Activated CD8-positive, alpha-beta T cell treated with anti-CD3 and anti-CD28 coated beads for 36 hours (primary cell): ENCODE measurements at regions of chr7 and their contacts with region 1.

Region 1: GRCh38 chr7:106056513-106057203 is 55.5 kb downstream of the SYPL1 start:
- DNase-seq: peak; percentile 83
- ATAC-seq: peak; percentile 97
- H3K4me3 Mint-ChIP-seq: no peak overlapping the region
- H3K27ac Mint-ChIP-seq: peak overlapping the region; percentile 34
- H3K4me1 Mint-ChIP-seq: peaks cover 25% of the 10 kb centered on the region
- H3K27me3 Mint-ChIP-seq: no peaks in the 10 kb centered on the region
- CTCF ChIP-seq: peak; percentile 87

Region 2: DNA sequence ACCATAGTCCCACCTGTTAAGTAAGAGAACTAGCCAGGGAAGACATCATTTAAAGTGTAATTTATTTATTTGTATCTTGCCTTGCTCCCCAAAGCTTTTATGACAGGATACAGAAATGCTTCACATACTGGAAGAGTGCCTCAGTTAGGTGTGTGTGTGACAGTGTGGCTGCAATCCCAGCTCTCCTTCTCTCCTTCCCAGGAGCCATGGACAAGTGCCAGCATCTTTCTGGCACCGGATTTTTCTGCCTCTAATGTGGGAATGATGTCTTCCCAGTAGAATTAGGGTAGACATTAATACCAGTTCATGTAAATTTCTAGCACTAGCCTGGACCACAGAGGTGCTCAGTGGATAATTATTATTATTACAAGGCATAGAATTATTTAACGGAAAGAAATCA is 150.0 kb before region 1 on chr7:
- CTCF ChIA-PET with region 1: no interaction called
- POLR2A ChIA-PET with region 1: no interaction called
- intact Hi-C with region 1: no loop called
- DNase-seq: no peak
- ATAC-seq: no peak
- H3K4me3 Mint-ChIP-seq: no peak overlapping the region
- H3K27ac Mint-ChIP-seq: no peak overlapping the region
- H3K4me1 Mint-ChIP-seq: peaks cover 8% of the 10 kb centered on the region
- H3K27me3 Mint-ChIP-seq: no peaks in the 10 kb centered on the region
- CTCF ChIP-seq: no peak

Region 3: GRCh38 chr7:106071356-106071998 is 14.8 kb after region 1 on chr7:
- CTCF ChIA-PET with region 1: interaction called, 50 read pairs
- POLR2A ChIA-PET with region 1: interaction called, 17 read pairs
- intact Hi-C with region 1: no loop called
- DNase-seq: peak; percentile 76
- ATAC-seq: peak; percentile 95
- H3K4me3 Mint-ChIP-seq: peak overlapping the region; percentile 72
- H3K27ac Mint-ChIP-seq: peak overlapping the region; percentile 97
- H3K4me1 Mint-ChIP-seq: peaks cover 55% of the 10 kb centered on the region
- H3K27me3 Mint-ChIP-seq: no peaks in the 10 kb centered on the region
- CTCF ChIP-seq: no peak

Region 4: GRCh38 chr7:106102387-106102966 is 45.8 kb after region 1 on chr7:
- CTCF ChIA-PET with region 1: interaction called, 11 read pairs
- POLR2A ChIA-PET with region 1: interaction called, 3 read pairs
- intact Hi-C with region 1: no loop called
- DNase-seq: no peak
- ATAC-seq: no peak
- H3K4me3 Mint-ChIP-seq: no peak overlapping the region
- H3K27ac Mint-ChIP-seq: no peak overlapping the region
- H3K4me1 Mint-ChIP-seq: peaks cover 68% of the 10 kb centered on the region
- H3K27me3 Mint-ChIP-seq: no peaks in the 10 kb centered on the region
- CTCF ChIP-seq: no peak

Region 5: GRCh38 chr7:106112117-106112971 is 55.7 kb after region 1 on chr7 and contains the start of gene SYPL1:
- CTCF ChIA-PET with region 1: interaction called, 3 read pairs
- POLR2A ChIA-PET with region 1: interaction called, 9 read pairs
- intact Hi-C with region 1: loop called (anchors 5 kb)
- DNase-seq: peak; percentile 94
- ATAC-seq: peak; percentile 87
- H3K4me3 Mint-ChIP-seq: peak within 1 kb of the TSS; percentile 84
- H3K27ac Mint-ChIP-seq: peak within 1 kb of the TSS; percentile 95
- H3K4me1 Mint-ChIP-seq: peaks cover 61% of the 10 kb centered on the region
- H3K27me3 Mint-ChIP-seq: no peaks in the 10 kb centered on the region
- CTCF ChIP-seq: no peak
- total RNA-seq, gene SYPL1: 40.1 to 44.6 TPM

Region 6: DNA sequence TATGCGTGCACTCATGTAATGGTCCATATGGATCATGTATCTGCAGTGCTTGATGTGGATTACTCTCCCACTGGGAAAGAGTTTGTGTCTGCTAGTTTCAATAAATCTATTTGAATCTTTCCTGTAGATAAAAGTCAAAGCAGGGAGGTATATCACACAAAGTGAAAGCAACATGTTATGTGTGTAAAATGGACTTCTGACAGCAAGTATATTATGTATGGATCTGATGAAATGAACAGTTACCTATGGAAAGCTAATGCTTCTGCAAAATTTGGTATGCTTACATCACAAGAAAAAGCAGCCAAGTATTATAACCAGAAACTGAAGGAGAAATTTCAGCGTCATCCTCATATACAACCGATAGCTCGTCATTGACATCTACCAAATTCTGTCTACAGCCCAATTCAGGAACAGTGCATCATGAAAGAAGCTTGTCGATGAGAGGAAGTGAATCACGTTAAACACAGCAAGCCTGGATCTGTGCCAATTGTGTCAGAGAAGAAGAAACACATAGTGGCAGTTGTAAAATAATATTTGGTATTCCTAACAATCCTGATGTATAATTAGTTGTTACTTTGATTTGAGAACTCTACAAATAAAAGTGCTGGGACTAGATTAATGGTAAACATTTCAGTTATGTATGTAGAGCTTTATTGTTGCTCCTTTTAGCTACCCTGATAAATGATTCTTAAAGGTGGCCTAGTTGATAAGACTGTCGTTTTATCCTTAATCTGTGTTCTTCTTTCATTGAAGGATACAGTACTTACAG is 69.7 kb after region 1 on chr7:
- CTCF ChIA-PET with region 1: interaction called, 11 read pairs
- POLR2A ChIA-PET with region 1: no interaction called
- intact Hi-C with region 1: no loop called
- DNase-seq: peak; percentile 74
- ATAC-seq: peak; percentile 79
- H3K4me3 Mint-ChIP-seq: peak overlapping the region; percentile 56
- H3K27ac Mint-ChIP-seq: peak overlapping the region; percentile 17
- H3K4me1 Mint-ChIP-seq: peaks cover 14% of the 10 kb centered on the region
- H3K27me3 Mint-ChIP-seq: no peaks in the 10 kb centered on the region
- CTCF ChIP-seq: no peak

Region 7: DNA sequence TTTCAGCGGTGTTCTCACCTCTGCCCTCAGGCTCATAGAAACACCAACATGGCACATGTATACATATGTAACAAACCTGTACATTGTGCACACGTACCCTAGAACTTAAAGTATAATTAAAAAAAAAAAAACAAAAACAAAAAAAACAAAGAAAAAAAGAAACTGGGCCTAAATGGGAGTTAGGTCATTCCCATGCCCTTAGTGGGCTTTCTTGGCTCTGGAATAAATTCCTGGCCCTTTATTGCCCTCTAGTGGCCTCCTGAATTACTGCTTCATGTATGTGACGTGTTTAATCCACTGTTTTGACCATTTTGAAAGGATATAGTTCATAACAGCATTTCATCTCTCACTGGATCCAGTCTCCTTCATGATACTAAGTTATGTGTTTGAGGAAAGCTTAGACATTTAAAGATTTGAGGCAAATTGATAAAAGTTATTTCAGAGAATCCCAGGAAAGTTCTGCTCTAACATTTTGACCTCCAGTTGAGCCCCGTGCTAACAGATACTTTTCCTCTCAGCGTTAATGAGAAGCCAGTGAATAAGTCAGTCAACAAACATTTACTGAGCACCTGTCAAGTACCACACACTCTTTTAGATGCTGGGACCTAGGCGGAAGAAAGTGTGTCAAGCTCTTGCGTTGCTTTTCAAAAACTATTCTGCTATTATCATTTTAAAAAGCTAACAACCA is 110.1 kb after region 1 on chr7:
- CTCF ChIA-PET with region 1: interaction called, 23 read pairs
- POLR2A ChIA-PET with region 1: no interaction called
- intact Hi-C with region 1: no loop called
- DNase-seq: peak; percentile 53
- ATAC-seq: peak; percentile 75
- H3K4me3 Mint-ChIP-seq: no peak overlapping the region
- H3K27ac Mint-ChIP-seq: no peak overlapping the region
- H3K4me1 Mint-ChIP-seq: peaks cover 2% of the 10 kb centered on the region
- H3K27me3 Mint-ChIP-seq: peaks cover 1% of the 10 kb centered on the region
- CTCF ChIP-seq: peak; percentile 97